ENCODE measurements at regions of chr15 and their contacts with region 1.

Region 1: GRCh38 chr15:56052395-56053045 is 59.1 kb upstream of the NEDD4 start:
- DNase-seq: peak; percentile 75 to 76
- ATAC-seq: peak; percentile 78 to 87
- H3K4me3 ChIP-seq: no peak overlapping the region
- H3K27ac ChIP-seq: peak overlapping the region; percentile 0 to 4; a peak in 1 of 6 replicates
- H3K4me1 ChIP-seq: 0 out of 3 replicates have a peak, but pooled peaks cover 6% of the 10 kb centered on the region
- CTCF ChIP-seq: peak; percentile 91
- EP300 ChIP-seq: no peak
- POLR2A ChIP-seq: no peak
- RAD21 ChIP-seq: peak; percentile 89

Region 2: DNA sequence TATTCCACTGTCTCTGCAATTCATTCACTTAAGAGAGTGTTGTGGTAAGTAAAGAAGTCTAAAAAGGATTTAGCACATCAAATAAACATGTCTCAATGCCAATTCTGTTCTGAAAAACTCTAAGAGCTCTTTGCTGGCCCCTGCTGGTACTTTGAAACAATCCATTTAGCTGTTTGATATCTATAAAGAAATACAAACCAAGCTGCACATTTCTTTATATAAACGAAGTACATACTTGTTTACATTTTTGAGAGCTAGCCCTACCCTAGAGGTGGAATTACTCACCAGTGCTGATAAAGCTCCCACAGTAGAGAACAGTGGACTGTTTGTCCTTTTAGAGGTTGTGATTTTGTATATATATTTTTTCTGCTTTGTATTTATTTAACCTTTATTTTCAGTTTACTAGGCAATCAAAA is 134.6 kb before region 1 on chr15:
- CTCF ChIA-PET with region 1: interaction called, 11 read pairs
- POLR2A ChIA-PET with region 1: no interaction called
- DNase-seq: peak; percentile 49 to 91
- ATAC-seq: peak; percentile 75 to 94
- H3K4me3 ChIP-seq: no peak overlapping the region
- H3K27ac ChIP-seq: peak overlapping the region; percentile 30 to 74; a peak in 4 of 6 replicates
- H3K4me1 ChIP-seq: peaks cover 17% of the 10 kb centered on the region; the same call in 2 of the 3 replicates
- CTCF ChIP-seq: peak; percentile 96
- EP300 ChIP-seq: no peak
- POLR2A ChIP-seq: no peak
- RAD21 ChIP-seq: peak; percentile 87 to 92

Region 3: DNA sequence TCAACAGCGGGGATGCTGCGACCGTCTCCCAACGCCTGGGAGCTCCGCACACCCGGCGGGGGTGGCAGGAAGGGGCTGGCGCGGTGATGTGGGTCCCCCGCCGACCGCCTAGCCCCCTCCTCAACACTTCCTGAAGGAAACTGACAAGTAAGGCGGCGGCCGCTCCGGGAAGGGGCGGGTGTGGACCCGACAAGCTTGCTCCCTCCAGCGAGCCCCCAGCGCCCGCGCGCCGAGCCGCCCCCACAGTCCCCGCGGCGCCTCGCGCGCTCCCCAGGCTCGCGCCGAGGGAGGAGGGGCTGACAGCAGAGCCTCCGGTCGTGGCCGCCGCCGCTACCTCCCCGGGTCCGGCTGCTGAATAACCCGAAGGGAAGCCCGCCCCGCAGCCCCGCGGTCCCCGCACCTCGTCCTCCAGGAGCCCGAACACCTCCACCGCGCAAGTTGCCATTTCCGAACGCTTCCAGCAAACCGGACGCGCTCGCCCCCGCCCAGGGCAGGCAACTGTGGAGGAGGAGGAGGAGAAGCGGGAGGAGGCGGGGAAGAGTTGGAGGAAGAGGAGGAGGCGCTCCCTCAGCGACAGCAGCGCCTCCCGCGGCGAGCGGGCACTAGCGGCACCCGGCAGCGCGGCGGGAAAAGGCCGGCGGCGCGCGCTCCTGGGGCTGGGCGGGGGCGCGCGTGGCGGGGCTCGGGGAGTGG is 59.3 kb before region 1 on chr15 and contains the start of gene NEDD4:
- CTCF ChIA-PET with region 1: interaction called, 68 read pairs
- POLR2A ChIA-PET with region 1: interaction called, 4 read pairs
- DNase-seq: peak; percentile 85 to 88
- ATAC-seq: peak; percentile 92 to 94
- H3K4me3 ChIP-seq: peak within 1 kb of the TSS; percentile 73
- H3K27ac ChIP-seq: peak within 1 kb of the TSS; percentile 92 to 94
- H3K4me1 ChIP-seq: peaks cover 30% of the 10 kb centered on the region
- CTCF ChIP-seq: peak; percentile 59
- EP300 ChIP-seq: no peak
- POLR2A ChIP-seq: peak; percentile 55; the same call in 1 of the 2 replicates
- RAD21 ChIP-seq: peak in 1 of 2 experiments; percentile 58; a peak in 2 of 5 replicates
- polyA plus RNA-seq, gene NEDD4: 62.9 and 78.8 TPM in 2 replicates

Region 4: GRCh38 chr15:56028430-56028829 is 24.1 kb before region 1 on chr15:
- CTCF ChIA-PET with region 1: interaction called, 11 read pairs
- POLR2A ChIA-PET with region 1: interaction called, 3 read pairs
- DNase-seq: no peak
- ATAC-seq: 0 out of 6 replicates have a peak, but pooled peaks have one; percentile 13 to 32
- H3K4me3 ChIP-seq: no peak overlapping the region
- H3K27ac ChIP-seq: no peak overlapping the region
- H3K4me1 ChIP-seq: peaks cover 5% of the 10 kb centered on the region; the same call in 1 of the 3 replicates
- CTCF ChIP-seq: no peak
- EP300 ChIP-seq: no peak
- POLR2A ChIP-seq: no peak
- RAD21 ChIP-seq: no peak

Region 5: DNA sequence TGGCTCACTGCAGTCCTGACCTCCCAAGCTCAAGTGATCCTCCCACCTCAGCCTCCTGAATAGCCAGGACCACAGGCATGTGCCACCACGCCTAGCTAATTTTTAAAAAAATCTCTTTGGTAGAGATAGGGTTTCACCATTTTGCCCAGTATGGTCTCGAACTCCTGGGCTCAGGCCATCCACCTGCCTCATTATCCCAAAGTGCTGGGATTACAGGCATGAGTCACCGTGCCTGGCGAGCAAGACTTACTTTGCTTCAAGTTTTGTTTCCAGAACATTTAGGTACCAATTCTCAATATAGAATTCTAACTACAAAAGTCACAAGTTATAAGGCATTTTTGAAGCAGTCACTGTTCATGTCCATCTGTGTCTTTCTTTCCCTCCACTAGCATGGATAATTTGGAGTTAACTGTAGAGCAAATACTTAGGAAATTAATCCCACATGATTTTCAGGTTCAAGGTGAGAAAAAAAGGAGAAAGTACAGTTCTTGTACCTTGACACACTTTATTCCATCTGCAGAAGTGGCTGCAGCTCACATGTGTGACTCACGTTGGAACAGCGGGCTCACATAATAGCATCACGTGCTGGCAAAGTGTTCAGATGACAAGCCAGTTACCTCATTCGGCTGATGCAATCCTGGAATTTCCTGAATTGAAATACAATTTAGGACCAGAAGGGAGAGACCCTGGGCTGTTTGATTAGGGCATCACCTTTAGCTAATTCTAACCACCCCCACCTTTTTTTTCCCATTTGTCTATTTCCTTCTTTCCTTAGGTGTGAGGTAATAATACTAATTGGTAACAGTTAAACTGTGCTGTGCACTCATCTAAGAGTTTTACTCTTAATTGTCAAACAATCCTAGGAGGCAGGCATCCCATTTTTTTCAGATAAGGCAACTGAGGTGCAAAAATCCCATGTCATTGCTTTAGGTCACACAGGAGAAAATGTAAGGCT is 12.2 kb before region 1 on chr15:
- CTCF ChIA-PET with region 1: interaction called, 30 read pairs
- POLR2A ChIA-PET with region 1: no interaction called
- DNase-seq: peak; percentile 66 to 90
- ATAC-seq: peak; percentile 85 to 89
- H3K4me3 ChIP-seq: no peak overlapping the region
- H3K27ac ChIP-seq: peak overlapping the region; percentile 80 to 87
- H3K4me1 ChIP-seq: peaks cover 44% of the 10 kb centered on the region
- CTCF ChIP-seq: no peak
- EP300 ChIP-seq: peak in 1 of 2 experiments; percentile 66; a peak in 1 of 5 replicates
- POLR2A ChIP-seq: no peak
- RAD21 ChIP-seq: peak in 1 of 2 experiments; percentile 22; a peak in 1 of 5 replicates

Measured in A549 (cell line).